ENCODE measurements at regions of chr15 and their contacts with region 1.

Region 1: GRCh38 chr15:78979456-78980320 is 34.8 kb upstream of the CTSH start:
- DNase-seq: no peak
- H3K4me3 ChIP-seq: no peak overlapping the region
- H3K27ac ChIP-seq: no peak overlapping the region
- H3K4me1 ChIP-seq: peaks cover 5% of the 10 kb centered on the region
- H3K27me3 ChIP-seq: no peaks in the 10 kb centered on the region
- CTCF ChIP-seq: peak in 2 of 3 experiments; percentile 58 to 66
- POLR2A ChIP-seq: no peak

Region 2: GRCh38 chr15:78909791-78910228 is 69.9 kb before region 1 on chr15:
- intact Hi-C with region 1: loop called (anchors 10 kb)
- DNase-seq: no peak
- H3K4me3 ChIP-seq: no peak overlapping the region
- H3K27ac ChIP-seq: peak overlapping the region; percentile 59
- H3K4me1 ChIP-seq: peaks cover 32% of the 10 kb centered on the region
- H3K27me3 ChIP-seq: no peaks in the 10 kb centered on the region
- CTCF ChIP-seq: peak in 2 of 3 experiments; percentile 43 to 60
- POLR2A ChIP-seq: no peak